Natural killer cell (primary cell): ENCODE measurements at regions of chr14 and their contacts with region 1.

Region 1: GRCh38 chr14:91350813-91351511 is 66.7 kb downstream of the CCDC88C start:
- DNase-seq: peak; percentile 46 to 87
- ATAC-seq: peak; percentile 54 to 75 (median 72)
- H3K4me3 ChIP-seq: peak overlapping the region; percentile 6
- H3K4me3 Mint-ChIP-seq: peak overlapping the region; percentile 90
- H3K27ac ChIP-seq: peak overlapping the region; percentile 86
- H3K27ac Mint-ChIP-seq: peak overlapping the region; percentile 96 to 97
- H3K4me1 ChIP-seq: peaks cover 92% of the 10 kb centered on the region
- H3K4me1 Mint-ChIP-seq: peaks cover 89 to 94% of the 10 kb centered on the region in 2 donors
- H3K27me3 ChIP-seq: no peaks in the 10 kb centered on the region
- H3K27me3 Mint-ChIP-seq: no peaks in the 10 kb centered on the region
- CTCF ChIP-seq: no peak

Region 2: GRCh38 chr14:91323671-91324605 is 27.0 kb before region 1 on chr14:
- intact Hi-C with region 1: loop called (anchors 1 kb)
- DNase-seq: peak; percentile 95
- ATAC-seq: peak; percentile 76 to 94 (median 82)
- H3K4me3 ChIP-seq: peak overlapping the region; percentile 11
- H3K4me3 Mint-ChIP-seq: peak overlapping the region; percentile 94
- H3K27ac ChIP-seq: peak overlapping the region; percentile 94
- H3K27ac Mint-ChIP-seq: peak overlapping the region; percentile 100
- H3K4me1 ChIP-seq: peaks cover 67% of the 10 kb centered on the region
- H3K4me1 Mint-ChIP-seq: peaks cover 48 to 59% of the 10 kb centered on the region in 2 donors
- H3K27me3 ChIP-seq: no peaks in the 10 kb centered on the region
- H3K27me3 Mint-ChIP-seq: no peaks in the 10 kb centered on the region
- CTCF ChIP-seq: peak; percentile 93

Region 3: GRCh38 chr14:91367173-91368171 is 16.5 kb after region 1 on chr14:
- intact Hi-C with region 1: loop called (anchors 1 kb)
- DNase-seq: peak; percentile 56 to 95
- ATAC-seq: peak; percentile 47 to 69 (median 68)
- H3K4me3 ChIP-seq: no peak overlapping the region
- H3K4me3 Mint-ChIP-seq: peak overlapping the region; percentile 86
- H3K27ac ChIP-seq: peak overlapping the region; percentile 80
- H3K27ac Mint-ChIP-seq: peak overlapping the region; percentile 96 to 98
- H3K4me1 ChIP-seq: peaks cover 96% of the 10 kb centered on the region
- H3K4me1 Mint-ChIP-seq: peaks cover 73 to 80% of the 10 kb centered on the region in 2 donors
- H3K27me3 ChIP-seq: no peaks in the 10 kb centered on the region
- H3K27me3 Mint-ChIP-seq: no peaks in the 10 kb centered on the region
- CTCF ChIP-seq: no peak

Region 4: GRCh38 chr14:91402771-91403600 is 52.0 kb after region 1 on chr14:
- intact Hi-C with region 1: loop called (anchors 2 kb)
- DNase-seq: peak in 1 of 2 donors; percentile 59
- ATAC-seq: peak; percentile 39 to 64 (median 43)
- H3K4me3 ChIP-seq: peak overlapping the region; percentile 26
- H3K4me3 Mint-ChIP-seq: peak overlapping the region; percentile 87
- H3K27ac ChIP-seq: peak overlapping the region; percentile 90
- H3K27ac Mint-ChIP-seq: peak overlapping the region; percentile 96 to 98
- H3K4me1 ChIP-seq: peaks cover 95% of the 10 kb centered on the region
- H3K4me1 Mint-ChIP-seq: peaks cover 86 to 91% of the 10 kb centered on the region in 2 donors
- H3K27me3 ChIP-seq: no peaks in the 10 kb centered on the region
- H3K27me3 Mint-ChIP-seq: no peaks in the 10 kb centered on the region
- CTCF ChIP-seq: no peak

Region 5: GRCh38 chr14:91606851-91607250 is 255.9 kb after region 1 on chr14:
- intact Hi-C with region 1: no loop called
- DNase-seq: no peak
- ATAC-seq: no peak
- H3K4me3 ChIP-seq: no peak overlapping the region
- H3K4me3 Mint-ChIP-seq: no peak overlapping the region
- H3K27ac ChIP-seq: no peak overlapping the region
- H3K27ac Mint-ChIP-seq: no peak overlapping the region
- H3K4me1 ChIP-seq: no peaks in the 10 kb centered on the region
- H3K4me1 Mint-ChIP-seq: no peaks in the 10 kb centered on the region
- H3K27me3 ChIP-seq: no peaks in the 10 kb centered on the region
- H3K27me3 Mint-ChIP-seq: peaks cover 0 to 5% of the 10 kb centered on the region in 2 donors
- CTCF ChIP-seq: no peak